Activated naive CD4-positive, alpha-beta T cell treated with anti-CD3 and anti-CD28 coated beads for 36 hours (primary cell): ENCODE measurements at regions of chr4 and their contacts with region 1.

Region 1: GRCh38 chr4:108166441-108167315 is 2.1 kb downstream of the LEF1 start:
- DNase-seq: peak; percentile 75
- H3K4me3 Mint-ChIP-seq: peak overlapping the region; percentile 88
- H3K27ac Mint-ChIP-seq: peak overlapping the region; percentile 97
- H3K4me1 Mint-ChIP-seq: peaks cover 34% of the 10 kb centered on the region
- H3K27me3 Mint-ChIP-seq: no peaks in the 10 kb centered on the region

Region 2: DNA sequence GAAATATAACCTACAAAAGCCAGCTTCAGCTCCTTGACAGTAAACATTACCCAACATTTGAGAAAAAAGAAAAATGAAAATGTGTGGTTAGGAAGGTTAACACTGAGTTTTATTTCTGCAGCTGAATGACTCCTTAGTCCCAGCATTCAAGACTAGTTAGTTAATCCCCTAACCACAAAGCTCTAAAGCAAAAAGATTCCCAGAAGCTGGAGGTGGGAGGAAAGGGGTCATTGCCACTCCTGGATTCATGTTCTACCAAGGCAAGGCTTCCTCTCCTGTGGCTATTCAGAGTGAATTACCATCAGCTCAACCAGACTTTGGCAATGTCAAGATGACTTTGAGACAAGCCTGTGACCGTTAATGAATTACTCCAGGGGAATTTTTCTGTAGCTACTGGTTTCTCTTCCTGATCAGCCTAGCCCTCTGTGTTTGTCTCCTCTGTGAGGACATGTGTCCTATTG is 113.4 kb before region 1 on chr4:
- CTCF ChIA-PET with region 1: no interaction called
- intact Hi-C with region 1: loop called (anchors 1 kb)
- DNase-seq: no peak
- H3K4me3 Mint-ChIP-seq: peak overlapping the region; percentile 34
- H3K27ac Mint-ChIP-seq: peak overlapping the region; percentile 93
- H3K4me1 Mint-ChIP-seq: peaks cover 94% of the 10 kb centered on the region
- H3K27me3 Mint-ChIP-seq: no peaks in the 10 kb centered on the region

Region 3: GRCh38 chr4:108118490-108118889 is 48.2 kb before region 1 on chr4:
- CTCF ChIA-PET with region 1: interaction called, 6 read pairs
- intact Hi-C with region 1: loop called (anchors 1 kb)
- DNase-seq: peak; percentile 58
- H3K4me3 Mint-ChIP-seq: peak overlapping the region; percentile 50
- H3K27ac Mint-ChIP-seq: peak overlapping the region; percentile 96
- H3K4me1 Mint-ChIP-seq: peaks cover 93% of the 10 kb centered on the region
- H3K27me3 Mint-ChIP-seq: no peaks in the 10 kb centered on the region

Region 4: DNA sequence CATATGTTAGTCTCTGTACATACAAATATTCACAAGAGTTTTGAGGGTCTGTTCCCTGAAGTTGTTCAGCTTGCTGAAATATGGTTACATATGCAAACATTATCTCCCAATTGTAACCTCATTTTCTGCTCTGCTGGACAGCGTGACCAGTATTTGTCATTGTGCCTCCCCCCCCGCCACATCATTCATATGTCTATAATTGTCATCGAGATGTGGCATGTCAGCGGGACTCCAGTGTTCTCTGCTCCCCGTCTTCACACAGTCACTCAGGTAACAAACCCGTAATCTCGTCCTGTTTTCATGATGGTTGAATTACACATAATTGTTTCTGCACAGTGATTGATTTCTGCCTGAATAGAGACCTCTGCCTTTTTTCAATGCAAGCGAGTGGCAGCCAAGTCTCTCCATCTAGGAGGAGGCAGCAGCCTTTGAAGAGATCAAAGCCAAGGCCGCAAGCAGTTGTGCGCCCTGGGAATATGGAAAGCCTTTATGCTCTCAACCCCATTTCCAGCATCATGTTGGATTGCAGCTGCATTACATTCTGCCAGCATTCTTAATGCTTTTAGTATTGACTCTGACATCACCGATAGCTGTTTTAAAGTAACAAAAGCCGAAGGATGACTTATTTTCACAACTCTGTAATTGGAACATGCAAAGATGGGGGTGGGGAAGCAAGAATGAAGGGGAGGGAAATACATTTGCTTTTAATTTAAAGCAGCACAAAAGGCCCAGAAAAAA is 25.3 kb before region 1 on chr4:
- CTCF ChIA-PET with region 1: interaction called, 8 read pairs
- intact Hi-C with region 1: loop called (anchors 1 kb)
- DNase-seq: peak; percentile 72
- H3K4me3 Mint-ChIP-seq: peak overlapping the region; percentile 77
- H3K27ac Mint-ChIP-seq: peak overlapping the region; percentile 99
- H3K4me1 Mint-ChIP-seq: peaks cover 89% of the 10 kb centered on the region
- H3K27me3 Mint-ChIP-seq: no peaks in the 10 kb centered on the region

Region 5: DNA sequence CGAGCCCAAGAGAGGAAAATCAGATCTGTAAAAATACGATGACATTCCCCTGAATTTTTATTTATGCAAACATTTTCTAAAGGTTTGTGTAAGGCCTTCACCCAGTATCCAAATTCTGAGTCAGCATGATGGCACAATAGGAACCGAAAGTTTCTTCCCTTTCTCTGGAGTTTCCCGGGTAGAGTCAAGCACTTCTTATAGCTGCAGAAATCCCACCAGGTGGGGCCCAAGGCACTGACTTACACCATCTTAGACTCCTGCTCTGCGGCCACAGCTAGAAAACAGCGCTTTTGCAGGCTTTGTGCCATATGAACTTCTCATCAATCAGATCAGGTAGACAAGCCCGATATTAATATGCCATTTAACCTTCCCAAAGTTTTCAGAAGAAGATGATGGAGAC is 11.3 kb before region 1 on chr4:
- CTCF ChIA-PET with region 1: interaction called, 5 read pairs
- intact Hi-C with region 1: loop called (anchors 1 kb)
- DNase-seq: peak; percentile 76
- H3K4me3 Mint-ChIP-seq: peak overlapping the region; percentile 75
- H3K27ac Mint-ChIP-seq: peak overlapping the region; percentile 97
- H3K4me1 Mint-ChIP-seq: peaks cover 77% of the 10 kb centered on the region
- H3K27me3 Mint-ChIP-seq: no peaks in the 10 kb centered on the region

Region 6: DNA sequence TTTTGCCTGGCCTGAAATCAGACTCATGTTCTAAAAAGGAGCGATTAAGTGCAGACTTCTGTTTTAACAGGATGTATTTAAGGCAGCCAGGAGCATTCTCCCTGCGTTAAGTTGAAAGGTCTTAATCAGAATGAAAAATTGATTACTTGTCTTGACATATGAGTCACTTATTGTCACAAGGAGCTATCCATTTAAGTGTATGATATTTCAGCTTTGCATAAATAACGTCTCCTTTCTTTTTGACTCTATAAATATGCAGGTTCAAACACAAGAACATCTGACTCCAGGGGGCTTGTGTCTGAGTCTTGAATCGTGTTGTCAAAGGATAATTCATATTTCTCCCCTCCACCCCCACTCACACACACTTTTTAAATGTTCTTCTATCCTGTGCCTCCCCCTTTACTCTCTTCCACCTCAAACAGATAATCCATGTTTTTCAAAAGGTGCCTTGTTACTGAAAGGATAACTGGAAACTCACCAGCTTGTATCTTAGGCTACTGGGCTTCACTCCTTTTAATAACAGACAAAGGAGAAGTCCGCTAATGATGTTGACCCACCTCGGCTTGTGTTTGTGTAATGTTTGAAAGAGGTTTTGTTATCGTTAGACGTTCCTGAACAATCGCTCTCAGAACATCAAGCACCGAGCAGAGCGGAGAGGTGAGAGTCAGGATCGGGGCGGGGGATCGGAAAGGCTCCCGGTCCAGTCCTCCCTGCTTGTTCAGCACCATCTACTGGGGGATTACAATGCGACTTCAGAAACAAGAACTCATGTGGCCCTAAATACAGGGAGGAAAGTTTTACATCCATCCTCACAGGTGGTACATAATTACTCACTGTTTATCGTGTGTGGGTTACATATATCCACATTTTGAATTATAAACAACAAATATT is 346.2 kb after region 1 on chr4:
- CTCF ChIA-PET with region 1: interaction called, 3 read pairs
- intact Hi-C with region 1: loop called (anchors 2 kb)
- DNase-seq: peak; percentile 72
- H3K4me3 Mint-ChIP-seq: peak overlapping the region; percentile 75
- H3K27ac Mint-ChIP-seq: peak overlapping the region; percentile 72
- H3K4me1 Mint-ChIP-seq: peaks cover 17% of the 10 kb centered on the region
- H3K27me3 Mint-ChIP-seq: no peaks in the 10 kb centered on the region